IMR-90 (cell line): ENCODE measurements at regions of chr12 and their contacts with region 1.

Region 1: DNA sequence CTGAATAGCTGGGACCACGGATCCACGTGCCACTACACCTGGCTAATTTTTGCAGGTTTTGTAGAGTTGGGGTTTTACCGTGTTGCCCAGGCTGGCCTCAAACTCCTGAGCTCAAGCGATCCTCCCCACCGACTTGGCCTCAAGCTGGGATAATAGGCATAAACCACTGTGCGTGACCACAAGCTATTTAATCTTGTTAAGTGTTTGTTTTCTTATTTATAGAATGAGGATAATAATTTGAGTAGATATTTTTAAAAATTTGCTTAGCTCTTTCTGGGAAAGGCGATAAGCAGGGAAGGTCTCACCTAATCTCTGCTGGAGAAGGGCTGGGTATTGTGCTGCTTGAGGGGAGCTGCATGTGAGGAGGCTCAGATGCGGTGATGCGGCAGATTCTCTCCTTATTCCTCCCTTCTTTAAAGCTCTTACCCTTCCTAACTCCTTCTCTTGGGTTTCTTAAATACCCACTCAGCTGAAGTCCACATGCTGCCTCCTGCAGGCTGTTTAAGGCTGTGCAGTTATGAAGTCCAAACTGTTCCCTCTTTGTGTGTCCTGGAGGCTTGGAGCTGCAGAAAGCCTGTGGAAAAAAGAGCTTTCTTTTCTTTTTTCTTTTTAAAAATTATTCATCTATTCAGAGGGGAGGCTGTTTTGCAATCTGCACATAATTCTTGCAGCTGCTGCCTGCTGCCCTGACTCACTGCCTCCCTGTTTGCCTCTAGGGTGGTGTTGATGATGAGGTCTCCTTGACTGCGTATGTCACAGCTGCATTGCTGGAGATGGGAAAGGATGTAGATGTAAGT is 37.9 kb downstream of the A2ML1 start:
- DNase-seq: peak; percentile 54
- ATAC-seq: peak; percentile 87
- H3K4me3 ChIP-seq: no peak overlapping the region
- H3K27ac ChIP-seq: no peak overlapping the region
- H3K4me1 ChIP-seq: no peaks in the 10 kb centered on the region
- H3K27me3 ChIP-seq: no peaks in the 10 kb centered on the region
- CTCF ChIP-seq: peak; percentile 51
- POLR2A ChIP-seq: no peak
- RAD21 ChIP-seq: peak; percentile 50

Region 2: DNA sequence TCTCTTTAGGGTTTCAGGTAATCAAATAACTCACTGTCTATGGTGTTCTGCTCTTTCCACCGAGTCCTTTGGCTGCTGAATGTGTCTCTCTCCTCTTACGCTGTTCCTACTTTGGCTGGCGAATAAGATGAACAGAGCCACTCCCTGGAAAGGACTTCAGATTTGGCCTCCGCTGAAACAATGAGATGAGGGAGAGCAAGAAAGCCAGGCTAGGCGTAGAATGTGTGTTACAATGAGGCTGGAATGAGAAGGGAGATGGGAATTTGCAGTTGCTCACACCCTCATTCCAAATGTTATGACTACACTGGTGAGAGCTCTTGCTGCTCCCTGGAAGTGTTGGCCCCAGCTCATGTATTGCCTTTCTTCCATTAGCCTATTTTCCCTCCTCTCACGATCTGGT is 197.8 kb before region 1 on chr12 and contains the start of gene MFAP5:
- CTCF ChIA-PET with region 1: interaction called, 3 read pairs
- POLR2A ChIA-PET with region 1: no interaction called
- dilution Hi-C with region 1: no loop called
- in situ Hi-C with region 1: no loop called
- intact Hi-C with region 1: loop called (anchors 1 kb)
- DNase-seq: peak; percentile 25
- ATAC-seq: no peak
- H3K4me3 ChIP-seq: no peak within 1 kb of the TSS
- H3K27ac ChIP-seq: no peak within 1 kb of the TSS
- H3K4me1 ChIP-seq: no peaks in the 10 kb centered on the region
- H3K27me3 ChIP-seq: peaks cover 12% of the 10 kb centered on the region
- CTCF ChIP-seq: no peak
- POLR2A ChIP-seq: no peak
- RAD21 ChIP-seq: no peak
- total RNA-seq, gene MFAP5: 0.56 and 0.90 TPM in 2 replicates

Region 3: DNA sequence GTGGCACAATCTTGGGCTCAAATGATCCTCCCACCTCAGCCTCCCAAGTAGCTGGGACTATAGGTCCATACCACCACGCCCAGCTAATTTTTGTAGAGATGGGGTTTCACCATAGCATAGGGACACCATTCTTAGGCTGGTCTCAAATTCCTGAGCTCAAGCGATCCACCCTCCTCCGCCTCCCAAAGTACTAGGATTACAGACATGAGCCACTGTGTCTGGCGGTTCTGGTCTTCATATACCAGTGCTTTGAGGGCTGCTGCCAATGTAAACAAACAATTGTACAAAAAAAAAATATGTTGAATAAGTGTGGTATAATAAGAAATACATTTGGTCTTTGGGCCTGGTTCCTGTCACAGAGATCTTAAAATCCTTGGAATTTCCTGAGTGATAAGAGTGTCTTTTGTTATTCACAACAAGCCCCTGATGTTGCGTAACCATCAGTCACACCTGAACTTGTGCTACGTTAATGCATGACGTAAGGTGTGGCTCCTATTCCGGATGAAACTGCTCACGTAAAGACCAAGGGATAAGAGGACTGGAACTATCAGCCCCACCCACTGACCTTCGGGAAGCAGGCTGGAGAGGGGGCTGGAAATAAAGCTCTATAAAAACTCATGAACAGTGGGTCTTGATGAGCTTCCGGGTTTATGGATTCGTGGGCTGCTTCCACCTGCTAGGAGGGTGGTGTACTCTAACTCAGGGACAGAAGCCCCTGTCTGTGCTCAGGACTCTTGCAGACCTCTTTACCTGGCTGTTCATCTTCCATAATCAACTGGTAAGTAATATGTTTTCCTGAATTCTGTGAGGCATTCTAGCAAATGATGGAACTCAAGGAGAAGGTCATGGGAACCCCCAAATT is 179.1 kb before region 1 on chr12:
- CTCF ChIA-PET with region 1: interaction called, 13 read pairs
- POLR2A ChIA-PET with region 1: no interaction called
- dilution Hi-C with region 1: no loop called
- in situ Hi-C with region 1: no loop called
- intact Hi-C with region 1: loop called (anchors 1 kb)
- DNase-seq: peak; percentile 43
- ATAC-seq: peak; percentile 32; the same call in 1 of the 2 replicates
- H3K4me3 ChIP-seq: no peak overlapping the region
- H3K27ac ChIP-seq: no peak overlapping the region
- H3K4me1 ChIP-seq: no peaks in the 10 kb centered on the region
- H3K27me3 ChIP-seq: no peaks in the 10 kb centered on the region; the same call in 1 of the 2 replicates
- CTCF ChIP-seq: no peak
- POLR2A ChIP-seq: no peak
- RAD21 ChIP-seq: no peak

Region 4: GRCh38 chr12:8734873-8735381 is 125.4 kb before region 1 on chr12:
- CTCF ChIA-PET with region 1: no interaction called
- POLR2A ChIA-PET with region 1: no interaction called
- dilution Hi-C with region 1: no loop called
- in situ Hi-C with region 1: no loop called
- intact Hi-C with region 1: no loop called
- DNase-seq: peak; percentile 19
- ATAC-seq: peak; percentile 49; the same call in 1 of the 2 replicates
- H3K4me3 ChIP-seq: no peak overlapping the region
- H3K27ac ChIP-seq: no peak overlapping the region
- H3K4me1 ChIP-seq: no peaks in the 10 kb centered on the region
- H3K27me3 ChIP-seq: no peaks in the 10 kb centered on the region
- CTCF ChIP-seq: no peak
- POLR2A ChIP-seq: no peak
- RAD21 ChIP-seq: no peak

Region 5: GRCh38 chr12:8780389-8780788 is 80.0 kb before region 1 on chr12:
- CTCF ChIA-PET with region 1: no interaction called
- POLR2A ChIA-PET with region 1: no interaction called
- dilution Hi-C with region 1: no loop called
- in situ Hi-C with region 1: no loop called
- intact Hi-C with region 1: no loop called
- DNase-seq: peak; percentile 44
- ATAC-seq: peak; percentile 66; the same call in 1 of the 2 replicates
- H3K4me3 ChIP-seq: no peak overlapping the region
- H3K27ac ChIP-seq: no peak overlapping the region
- H3K4me1 ChIP-seq: peaks cover 4% of the 10 kb centered on the region; the same call in 1 of the 2 replicates
- H3K27me3 ChIP-seq: no peaks in the 10 kb centered on the region
- CTCF ChIP-seq: peak; percentile 35
- POLR2A ChIP-seq: no peak
- RAD21 ChIP-seq: no peak